BJ (cell line): ENCODE measurements at regions of chr14 and their contacts with region 1.

Region 1: DNA sequence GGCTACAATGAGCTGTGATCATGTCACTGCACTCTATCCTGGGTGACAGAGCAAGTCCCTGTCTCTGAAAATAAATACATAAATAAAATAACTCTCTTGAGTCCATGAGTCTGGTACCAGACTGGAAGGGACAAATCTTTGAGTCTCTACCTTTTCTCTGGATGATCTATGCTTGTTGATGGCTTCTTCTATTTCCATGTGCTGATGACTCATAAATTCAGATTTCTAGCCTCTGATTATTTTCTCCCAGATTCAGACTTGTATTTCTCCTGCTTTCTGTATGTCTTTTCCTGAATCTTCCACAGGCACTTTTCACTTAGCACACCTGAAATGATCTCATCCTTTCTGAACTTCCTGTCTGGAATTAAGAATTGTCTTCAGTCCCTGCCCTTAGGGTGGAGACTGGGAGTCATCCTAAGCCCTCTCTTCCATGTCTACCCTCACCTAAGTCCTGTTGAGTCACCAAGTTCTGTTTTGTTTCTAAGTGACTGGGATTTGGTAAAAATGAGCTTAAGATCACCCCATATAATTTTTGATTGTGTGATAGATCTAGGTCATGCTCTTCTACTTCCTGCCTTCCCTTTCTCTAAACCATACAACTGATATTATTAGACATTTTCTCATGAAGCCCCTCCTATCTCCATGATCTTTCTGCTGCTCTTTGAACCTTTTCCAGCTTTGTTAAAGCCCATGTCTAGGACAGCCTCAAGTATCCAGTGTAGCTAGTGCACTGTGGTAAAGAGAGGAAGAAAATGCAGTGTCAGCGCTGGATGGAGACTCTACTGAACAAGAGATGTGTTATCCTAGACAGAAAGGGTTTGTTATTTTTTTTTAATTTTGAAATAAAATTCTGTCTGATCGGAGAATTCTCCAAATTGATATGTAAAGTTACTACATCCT is 13.1 kb downstream of the AKAP6 start:
- DNase-seq: no peak
- H3K4me3 ChIP-seq: no peak overlapping the region
- H3K27me3 ChIP-seq: no peaks in the 10 kb centered on the region
- CTCF ChIP-seq: no peak

Region 2: GRCh38 chr14:32324601-32325243 is 17.5 kb before region 1 on chr14:
- CTCF ChIA-PET with region 1: no interaction called
- POLR2A ChIA-PET with region 1: no interaction called
- DNase-seq: no peak
- H3K4me3 ChIP-seq: no peak overlapping the region
- H3K27me3 ChIP-seq: no peaks in the 10 kb centered on the region; the same call in 1 of the 2 replicates
- CTCF ChIP-seq: no peak

Region 3: DNA sequence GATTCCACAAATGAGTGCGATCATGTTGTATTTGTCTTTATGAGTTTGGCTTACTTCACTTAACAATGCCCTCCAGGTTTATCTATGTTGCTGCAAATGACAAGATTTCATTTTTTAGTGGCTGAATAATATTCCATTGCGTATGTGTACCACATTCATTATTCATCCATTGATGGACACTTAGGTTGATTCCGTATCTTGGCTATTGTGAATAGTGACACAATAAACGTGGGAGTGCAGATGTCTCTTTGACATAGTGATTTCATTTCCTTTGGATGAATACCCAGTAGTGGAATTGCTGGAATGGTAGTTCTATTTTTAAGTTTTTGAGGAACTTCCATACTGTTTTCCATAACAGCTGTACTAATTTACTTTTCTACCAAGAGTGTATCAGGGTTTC is 10.4 kb after region 1 on chr14:
- CTCF ChIA-PET with region 1: interaction called, 10 read pairs
- POLR2A ChIA-PET with region 1: no interaction called
- DNase-seq: no peak
- H3K4me3 ChIP-seq: no peak overlapping the region
- H3K27me3 ChIP-seq: no peaks in the 10 kb centered on the region
- CTCF ChIP-seq: no peak

Region 4: GRCh38 chr14:32622742-32623141 is 280.5 kb after region 1 on chr14:
- CTCF ChIA-PET with region 1: no interaction called
- POLR2A ChIA-PET with region 1: no interaction called
- DNase-seq: no peak
- H3K4me3 ChIP-seq: no peak overlapping the region
- H3K27me3 ChIP-seq: no peaks in the 10 kb centered on the region
- CTCF ChIP-seq: no peak